Activated CD4-positive, alpha-beta T cell treated with anti-CD3 and anti-CD28 coated beads, Interleukin-2, amount 10 ng/mL, durations not matched to agents 7 days and 5 days (primary cell): ENCODE measurements at regions of chr20 and their contacts with region 1.

Region 1: DNA sequence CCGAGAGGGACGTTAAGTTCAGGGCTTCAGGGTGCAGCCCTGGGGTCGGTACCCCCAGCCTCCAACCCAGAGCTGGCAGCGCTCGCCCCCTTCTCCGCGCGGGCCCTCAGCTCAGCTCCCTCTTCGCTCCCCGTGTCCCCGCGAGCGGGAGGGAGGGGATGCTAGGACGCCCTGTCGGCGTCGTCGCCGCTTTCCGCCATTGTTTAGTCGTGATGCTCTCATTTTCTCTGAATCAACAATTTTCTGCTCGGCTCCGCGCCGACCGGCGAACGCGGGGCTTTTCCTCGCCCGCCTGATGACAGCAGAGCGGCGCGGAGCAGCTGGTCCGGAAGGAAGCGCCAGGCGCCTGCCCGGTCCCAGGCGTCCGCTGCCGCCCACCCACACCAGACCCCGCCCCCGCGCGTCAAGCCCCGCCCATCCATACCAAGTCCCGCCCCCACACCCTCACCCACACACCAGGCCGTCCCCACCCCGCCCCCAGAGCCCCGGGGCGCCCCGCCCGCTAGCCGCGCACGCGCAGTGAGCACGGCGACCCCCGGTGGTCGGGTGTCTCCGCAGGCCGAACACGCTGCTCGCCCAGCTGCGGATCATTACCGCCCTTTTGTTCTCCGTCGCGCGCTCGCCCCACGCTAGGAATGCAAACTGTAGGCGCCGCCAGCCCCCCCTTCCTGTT is 50.1 kb upstream of the SLC32A1 start:
- DNase-seq: peak; percentile 53
- H3K4me3 Mint-ChIP-seq: peak overlapping the region; percentile 76
- H3K27ac Mint-ChIP-seq: peak overlapping the region; percentile 60
- H3K4me1 Mint-ChIP-seq: peaks cover 11% of the 10 kb centered on the region
- H3K27me3 Mint-ChIP-seq: peaks cover 40% of the 10 kb centered on the region

Region 2: DNA sequence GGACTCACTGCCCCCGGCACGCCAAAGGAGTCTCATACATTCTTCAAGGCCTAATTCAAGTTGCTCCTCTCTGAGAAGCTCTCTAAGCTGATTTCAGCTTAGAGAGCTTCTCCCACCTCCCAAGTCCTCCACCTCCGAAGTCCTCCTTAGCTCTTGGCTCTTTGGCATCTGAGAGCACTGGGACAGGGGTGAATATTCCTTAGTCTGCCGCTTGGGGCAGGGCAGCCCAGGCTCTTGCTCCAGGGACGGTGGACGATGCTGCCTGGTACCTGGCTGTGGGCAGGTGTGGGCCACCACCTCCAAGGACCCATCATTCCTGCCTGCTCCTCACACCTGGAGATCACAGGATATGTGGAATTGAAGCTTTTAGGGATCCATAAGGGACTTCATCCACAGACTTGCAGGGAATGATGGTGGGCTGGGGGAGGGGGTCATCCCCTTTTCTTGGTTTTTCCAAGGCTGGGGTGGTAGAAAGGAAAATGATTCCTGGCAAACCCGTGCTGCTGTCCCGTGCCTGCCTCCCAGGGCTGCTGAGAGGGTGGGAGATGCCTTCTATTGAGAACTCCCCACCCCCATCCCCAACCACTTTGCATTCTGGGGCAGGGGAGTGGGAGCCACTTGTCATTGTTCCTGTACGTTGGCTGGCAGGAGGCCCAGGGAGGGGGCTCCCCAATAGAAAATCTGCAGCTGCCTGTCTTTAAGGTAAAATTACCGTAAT is 15.2 kb before region 1 on chr20:
- CTCF ChIA-PET with region 1: interaction called, 10 read pairs
- POLR2A ChIA-PET with region 1: no interaction called
- DNase-seq: peak; percentile 14
- H3K4me3 Mint-ChIP-seq: no peak overlapping the region
- H3K27ac Mint-ChIP-seq: no peak overlapping the region
- H3K4me1 Mint-ChIP-seq: no peaks in the 10 kb centered on the region
- H3K27me3 Mint-ChIP-seq: peaks cover 13% of the 10 kb centered on the region

Region 3: GRCh38 chr20:38730989-38731737 is 56.9 kb after region 1 on chr20:
- CTCF ChIA-PET with region 1: no interaction called
- POLR2A ChIA-PET with region 1: no interaction called
- DNase-seq: peak; percentile 69
- H3K4me3 Mint-ChIP-seq: peak overlapping the region; percentile 34
- H3K27ac Mint-ChIP-seq: no peak overlapping the region
- H3K4me1 Mint-ChIP-seq: peaks cover 41% of the 10 kb centered on the region
- H3K27me3 Mint-ChIP-seq: peaks cover 91% of the 10 kb centered on the region